IMR-90 (cell line): ENCODE measurements at regions of chr19 and their contacts with region 1.

Region 1: GRCh38 chr19:610801-611505 is 21.3 kb downstream of the HCN2 start:
- DNase-seq: peak; percentile 76
- ATAC-seq: peak; percentile 70
- H3K4me3 ChIP-seq: no peak overlapping the region
- H3K27ac ChIP-seq: peak overlapping the region; percentile 38
- H3K4me1 ChIP-seq: peaks cover 10% of the 10 kb centered on the region
- H3K27me3 ChIP-seq: no peaks in the 10 kb centered on the region; the same call in 1 of the 2 replicates
- CTCF ChIP-seq: no peak
- POLR2A ChIP-seq: no peak
- RAD21 ChIP-seq: no peak

Region 2: GRCh38 chr19:584240-585001 is 26.5 kb before region 1 on chr19:
- CTCF ChIA-PET with region 1: no interaction called
- POLR2A ChIA-PET with region 1: no interaction called
- dilution Hi-C with region 1: no loop called
- in situ Hi-C with region 1: no loop called
- intact Hi-C with region 1: no loop called
- DNase-seq: peak; percentile 27
- ATAC-seq: peak; percentile 52
- H3K4me3 ChIP-seq: no peak overlapping the region
- H3K27ac ChIP-seq: no peak overlapping the region
- H3K4me1 ChIP-seq: peaks cover 7% of the 10 kb centered on the region
- H3K27me3 ChIP-seq: peaks cover 5% of the 10 kb centered on the region
- CTCF ChIP-seq: peak; percentile 85
- POLR2A ChIP-seq: no peak
- RAD21 ChIP-seq: peak; percentile 83

Region 3: DNA sequence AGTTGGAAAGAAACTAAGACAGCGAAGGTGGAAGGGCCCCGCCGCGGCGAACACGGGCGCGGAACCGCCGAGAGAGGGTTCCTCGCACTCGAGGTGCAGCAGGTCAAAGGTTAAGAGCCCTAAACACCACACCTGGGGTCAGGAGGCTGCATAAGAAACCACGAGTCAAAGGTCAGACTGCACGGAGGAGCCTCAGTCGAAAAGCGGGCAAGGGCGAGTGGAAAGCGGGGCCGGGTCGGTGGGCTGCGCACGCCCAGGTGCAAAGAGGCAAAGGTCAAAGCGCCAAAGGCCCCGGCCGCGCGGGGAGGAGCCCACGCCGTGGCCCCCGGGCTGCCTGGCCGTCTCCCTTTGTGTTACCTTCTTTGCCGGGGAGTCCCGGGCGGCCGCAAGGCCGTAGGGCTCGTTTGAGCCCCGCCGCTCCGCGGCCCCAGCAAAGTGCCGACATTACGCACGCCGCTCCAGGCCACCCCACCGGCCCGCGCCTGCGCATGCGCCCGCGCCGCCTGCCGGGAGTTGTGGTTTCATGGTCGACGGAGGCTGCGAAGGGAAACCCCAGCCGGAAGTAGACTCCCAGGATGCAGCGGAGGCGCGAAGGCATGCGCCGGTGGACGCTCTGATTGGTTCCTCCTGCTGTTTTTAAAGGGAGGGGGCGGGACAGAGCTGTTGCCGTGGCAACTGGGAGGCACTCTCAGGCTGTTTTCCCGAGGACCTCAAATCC is 22.3 kb after region 1 on chr19 and contains the start of gene POLRMT:
- CTCF ChIA-PET with region 1: no interaction called
- POLR2A ChIA-PET with region 1: no interaction called
- dilution Hi-C with region 1: no loop called
- in situ Hi-C with region 1: no loop called
- intact Hi-C with region 1: loop called (anchors 2 kb)
- DNase-seq: peak; percentile 98
- ATAC-seq: peak; percentile 96
- H3K4me3 ChIP-seq: peak within 1 kb of the TSS; percentile 66
- H3K27ac ChIP-seq: peak within 1 kb of the TSS; percentile 82
- H3K4me1 ChIP-seq: peaks cover 9% of the 10 kb centered on the region
- H3K27me3 ChIP-seq: no peaks in the 10 kb centered on the region
- CTCF ChIP-seq: 0 out of 2 replicates have a peak, but pooled peaks have one; percentile 19
- POLR2A ChIP-seq: peak; percentile 57
- RAD21 ChIP-seq: no peak
- total RNA-seq, gene POLRMT: 9.9 and 10.3 TPM in 2 replicates